ENCODE measurements at regions of chr4 and their contacts with region 1.

Region 1: GRCh38 chr4:121717680-121718237 is 21.0 kb upstream of the ANXA5 start:
- DNase-seq: no peak
- ATAC-seq: no peak
- H3K4me3 ChIP-seq: no peak overlapping the region
- H3K4me3 Mint-ChIP-seq: no peak overlapping the region
- H3K27ac ChIP-seq: no peak overlapping the region
- H3K27ac Mint-ChIP-seq: no peak overlapping the region
- H3K4me1 ChIP-seq: no peaks in the 10 kb centered on the region
- H3K4me1 Mint-ChIP-seq: no peaks in the 10 kb centered on the region
- H3K27me3 ChIP-seq: no peaks in the 10 kb centered on the region
- H3K27me3 Mint-ChIP-seq: peaks cover 24% of the 10 kb centered on the region
- CTCF ChIP-seq: no peak

Region 2: DNA sequence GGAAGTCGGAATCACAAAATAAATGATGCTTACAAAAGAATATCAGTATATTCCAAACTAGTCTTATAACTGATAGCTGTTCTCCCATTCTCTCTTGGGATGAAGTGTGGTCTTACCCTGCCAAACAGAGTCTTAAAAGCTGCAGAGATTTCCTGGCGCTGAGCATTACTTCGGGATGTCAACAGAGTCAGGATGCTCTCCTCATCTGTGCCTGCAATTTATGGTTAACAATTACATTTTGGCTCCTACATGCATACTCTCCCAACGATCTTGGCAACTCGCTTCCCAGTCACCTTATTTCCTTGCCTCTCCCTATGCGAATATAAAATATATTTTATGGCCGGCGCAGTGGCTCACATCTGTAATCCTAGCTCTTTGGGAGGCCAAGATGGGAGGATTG is 33.2 kb before region 1 on chr4:
- CTCF ChIA-PET with region 1: no interaction called
- POLR2A ChIA-PET with region 1: interaction called, 3 read pairs
- intact Hi-C with region 1: loop called in 1 of 2 experiments (anchors 1 kb)
- DNase-seq: no peak
- ATAC-seq: no peak
- H3K4me3 ChIP-seq: no peak overlapping the region
- H3K4me3 Mint-ChIP-seq: no peak overlapping the region
- H3K27ac ChIP-seq: no peak overlapping the region
- H3K27ac Mint-ChIP-seq: no peak overlapping the region
- H3K4me1 ChIP-seq: no peaks in the 10 kb centered on the region
- H3K4me1 Mint-ChIP-seq: no peaks in the 10 kb centered on the region
- H3K27me3 ChIP-seq: no peaks in the 10 kb centered on the region
- H3K27me3 Mint-ChIP-seq: no peaks in the 10 kb centered on the region
- CTCF ChIP-seq: no peak